ENCODE measurements at regions of chr11 and their contacts with region 1.

Region 1: GRCh38 chr11:45371251-45372115 is 85.3 kb upstream of the SYT13 start:
- DNase-seq: peak; percentile 86

Region 2: GRCh38 chr11:45400591-45400990 is 29.1 kb after region 1 on chr11:
- intact Hi-C with region 1: no loop called
- DNase-seq: peak; percentile 30

Region 3: GRCh38 chr11:45556851-45557707 is 185.6 kb after region 1 on chr11:
- intact Hi-C with region 1: no loop called
- DNase-seq: no peak

Region 4: GRCh38 chr11:45655347-45655756 is 283.9 kb after region 1 on chr11:
- intact Hi-C with region 1: loop called (anchors 10 kb)
- DNase-seq: peak; percentile 92

Region 5: GRCh38 chr11:45765836-45766235 is 394.4 kb after region 1 on chr11:
- intact Hi-C with region 1: loop called (anchors 5 to 10 kb)
- DNase-seq: no peak

Region 6: DNA sequence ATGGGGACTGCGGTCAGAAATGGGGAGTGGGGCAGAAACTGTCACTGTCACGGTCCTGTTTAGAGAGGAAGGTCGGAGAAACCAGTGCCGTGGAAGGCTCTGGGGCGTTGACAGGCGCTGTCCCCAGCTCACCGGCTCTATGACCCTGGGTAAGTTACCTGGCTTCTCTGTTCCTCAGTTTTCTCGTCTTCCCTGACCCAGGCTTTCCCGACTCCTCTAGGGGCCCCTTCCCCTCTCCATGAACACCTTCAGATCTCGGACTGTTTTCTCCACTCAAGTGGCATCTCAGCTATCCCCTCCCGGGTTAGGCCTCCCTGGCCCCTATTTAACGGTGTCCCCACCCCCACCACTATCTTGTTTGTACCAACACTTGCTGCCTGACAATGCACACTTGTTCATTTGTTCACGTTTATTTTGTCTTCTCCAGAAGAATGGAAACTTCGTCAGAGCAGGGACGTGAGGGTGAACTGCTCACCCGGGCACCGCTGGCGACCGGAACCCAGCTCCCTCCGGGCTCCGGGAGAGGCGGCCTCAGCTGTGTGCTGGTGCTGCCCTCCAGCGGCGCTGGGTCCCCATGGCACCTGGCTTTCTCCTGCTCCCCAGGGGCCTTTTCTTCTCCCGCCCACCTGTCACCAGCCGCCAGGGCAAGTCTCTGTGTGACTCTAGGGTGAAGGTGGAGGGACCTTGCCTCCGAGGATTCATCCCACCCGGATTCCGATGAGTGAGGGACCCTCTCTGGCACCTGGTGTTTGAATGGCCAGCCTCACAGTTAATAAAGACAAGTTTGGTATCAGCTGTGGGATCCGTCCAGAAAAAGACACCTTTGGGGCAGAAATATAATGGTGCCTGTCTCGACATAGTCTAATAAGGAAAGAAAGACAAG is 400.3 kb after region 1 on chr11:
- intact Hi-C with region 1: loop called (anchors 5 to 10 kb)
- DNase-seq: peak; percentile 95

Measured in posterior vena cava (tissue), 2 donors.